Caco-2 (cell line): ENCODE measurements at regions of chr12 and their contacts with region 1.

Region 1: DNA sequence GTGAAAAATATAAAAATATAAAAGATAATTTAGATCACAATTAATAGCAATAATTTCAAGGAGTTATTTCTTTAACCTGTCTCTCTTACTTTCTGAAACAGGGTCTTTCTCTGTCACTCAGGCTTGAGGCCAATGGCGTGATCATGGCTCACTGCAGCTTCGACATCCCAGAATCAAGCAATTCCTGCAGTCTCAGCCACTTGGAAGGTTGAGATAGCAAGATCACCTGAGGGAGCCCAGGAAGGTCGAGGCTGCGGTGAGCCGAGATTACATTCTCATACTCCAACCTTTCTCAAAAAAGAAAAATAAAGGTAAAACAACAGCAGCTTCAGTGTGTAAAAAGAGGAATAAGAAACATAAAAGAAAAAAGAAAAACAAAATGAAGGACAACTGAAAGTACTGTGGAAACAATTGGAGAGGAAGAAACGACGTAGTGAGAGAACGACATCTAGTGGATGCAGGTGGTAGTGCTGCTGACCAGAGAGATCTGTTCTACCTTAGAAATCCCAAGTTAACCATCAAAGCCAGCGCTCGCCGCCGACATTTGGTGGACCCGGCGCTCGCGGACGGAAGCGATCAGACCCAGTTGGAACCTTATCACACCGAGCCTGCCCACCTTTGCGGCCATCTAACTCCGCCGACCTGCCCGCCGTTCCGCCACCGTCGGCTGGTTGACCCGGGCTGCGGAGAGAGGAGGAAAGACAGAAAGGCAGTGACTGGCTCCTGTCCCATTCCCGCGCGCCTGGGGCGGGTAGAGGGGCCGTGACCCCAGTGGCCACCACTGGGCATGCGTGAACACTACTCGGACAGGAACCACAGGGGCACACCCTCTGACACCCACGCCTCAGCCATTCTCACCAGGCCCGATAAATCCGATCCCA is 196.1 kb downstream of the ALG10 start:
- DNase-seq: peak; percentile 74 to 79
- H3K4me3 ChIP-seq: peak overlapping the region; percentile 12
- H3K4me3 Mint-ChIP-seq: peak overlapping the region; percentile 30
- H3K27ac Mint-ChIP-seq: no peak overlapping the region
- H3K4me1 ChIP-seq: no peaks in the 10 kb centered on the region
- H3K4me1 Mint-ChIP-seq: no peaks in the 10 kb centered on the region
- H3K27me3 ChIP-seq: no peaks in the 10 kb centered on the region; the same call in 1 of the 2 replicates
- H3K27me3 Mint-ChIP-seq: peaks cover 12% of the 10 kb centered on the region
- CTCF ChIP-seq: peak; percentile 93 to 94

Region 2: DNA sequence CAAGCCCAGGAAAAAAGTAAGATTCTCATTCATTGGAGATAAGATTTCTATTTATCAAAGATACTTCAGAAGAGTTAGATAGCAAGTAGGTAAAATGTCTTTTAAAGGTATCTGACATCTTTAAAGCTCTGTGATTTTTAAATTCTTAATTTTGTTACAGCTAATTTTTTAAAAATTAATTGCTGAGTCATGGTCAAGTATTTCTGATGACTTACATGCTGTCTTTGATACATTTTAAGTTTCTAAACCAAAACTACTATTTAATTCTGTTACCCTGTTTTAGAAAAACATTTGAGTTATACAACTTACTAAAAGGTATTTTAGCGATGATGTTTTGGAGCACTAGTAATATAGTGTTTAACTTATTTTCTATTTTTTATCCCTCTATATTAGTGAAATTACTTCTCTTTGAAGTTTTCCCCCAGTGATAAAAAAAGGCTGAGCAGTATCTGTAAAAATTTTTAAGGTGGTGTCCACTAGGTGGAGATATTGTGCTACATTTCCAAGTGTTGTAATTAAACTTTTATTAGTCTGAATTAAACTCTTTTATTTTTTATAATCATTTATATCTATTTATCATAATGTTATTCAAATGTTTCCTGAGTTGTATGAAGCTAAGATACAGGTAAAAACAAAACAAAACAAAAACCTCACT is 184.7 kb before region 1 on chr12:
- CTCF ChIA-PET with region 1: no interaction called
- POLR2A ChIA-PET with region 1: no interaction called
- intact Hi-C with region 1: loop called (anchors 1 kb)
- DNase-seq: peak in 1 of 2 experiments; percentile 29
- H3K4me3 ChIP-seq: no peak overlapping the region
- H3K4me3 Mint-ChIP-seq: no peak overlapping the region
- H3K27ac Mint-ChIP-seq: no peak overlapping the region
- H3K4me1 ChIP-seq: no peaks in the 10 kb centered on the region
- H3K4me1 Mint-ChIP-seq: no peaks in the 10 kb centered on the region
- H3K27me3 ChIP-seq: no peaks in the 10 kb centered on the region
- H3K27me3 Mint-ChIP-seq: no peaks in the 10 kb centered on the region
- CTCF ChIP-seq: peak; percentile 36 to 65

Region 3: DNA sequence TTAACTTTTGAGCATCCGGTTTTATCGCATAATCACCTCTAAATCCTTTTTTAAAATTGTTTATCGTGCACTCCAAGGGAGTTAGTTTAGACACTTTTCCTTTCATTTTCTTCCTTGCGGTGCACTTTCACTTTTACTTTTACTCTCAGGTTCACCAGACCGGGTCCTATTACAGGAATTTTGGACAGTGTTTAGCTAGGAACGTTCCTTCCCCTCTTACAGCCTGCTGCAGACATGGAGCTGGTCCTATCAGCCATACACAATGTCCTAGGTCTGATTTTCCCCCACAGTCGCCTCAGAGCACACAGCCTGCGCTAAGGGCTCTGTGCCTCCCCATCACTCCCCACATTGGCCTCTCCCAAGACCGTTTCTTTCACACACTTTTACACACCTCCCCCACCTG is 92.2 kb before region 1 on chr12:
- CTCF ChIA-PET with region 1: interaction called, 4 read pairs
- POLR2A ChIA-PET with region 1: no interaction called
- intact Hi-C with region 1: loop called (anchors 1 kb)
- DNase-seq: no peak
- H3K4me3 ChIP-seq: no peak overlapping the region
- H3K4me3 Mint-ChIP-seq: no peak overlapping the region
- H3K27ac Mint-ChIP-seq: no peak overlapping the region
- H3K4me1 ChIP-seq: no peaks in the 10 kb centered on the region
- H3K4me1 Mint-ChIP-seq: no peaks in the 10 kb centered on the region
- H3K27me3 ChIP-seq: no peaks in the 10 kb centered on the region
- H3K27me3 Mint-ChIP-seq: peaks cover 4% of the 10 kb centered on the region
- CTCF ChIP-seq: no peak

Region 4: DNA sequence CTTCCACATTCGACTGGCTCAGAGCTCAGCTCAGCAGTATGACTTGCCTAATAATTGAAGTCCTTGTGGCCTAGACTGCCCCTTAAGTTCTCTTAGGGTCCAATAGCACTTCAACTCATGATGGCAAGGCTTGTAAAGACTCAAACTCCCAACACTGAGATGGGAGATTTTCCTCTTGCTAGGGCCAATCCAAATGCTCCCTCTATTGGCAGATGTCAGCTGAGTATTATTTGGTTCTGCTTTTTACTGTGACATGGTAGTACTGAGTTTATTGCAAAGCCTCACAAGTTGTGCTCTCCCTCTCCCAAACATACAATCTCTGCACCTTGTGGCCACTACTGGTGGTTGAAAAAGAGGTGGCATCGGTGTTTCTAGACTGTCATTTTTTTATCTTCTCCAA is 31.9 kb before region 1 on chr12:
- CTCF ChIA-PET with region 1: no interaction called
- POLR2A ChIA-PET with region 1: no interaction called
- intact Hi-C with region 1: loop called (anchors 1 kb)
- DNase-seq: no peak
- H3K4me3 ChIP-seq: no peak overlapping the region
- H3K4me3 Mint-ChIP-seq: no peak overlapping the region
- H3K27ac Mint-ChIP-seq: no peak overlapping the region
- H3K4me1 ChIP-seq: no peaks in the 10 kb centered on the region
- H3K4me1 Mint-ChIP-seq: no peaks in the 10 kb centered on the region
- H3K27me3 ChIP-seq: no peaks in the 10 kb centered on the region
- H3K27me3 Mint-ChIP-seq: no peaks in the 10 kb centered on the region
- CTCF ChIP-seq: peak; percentile 19 to 24

Region 5: DNA sequence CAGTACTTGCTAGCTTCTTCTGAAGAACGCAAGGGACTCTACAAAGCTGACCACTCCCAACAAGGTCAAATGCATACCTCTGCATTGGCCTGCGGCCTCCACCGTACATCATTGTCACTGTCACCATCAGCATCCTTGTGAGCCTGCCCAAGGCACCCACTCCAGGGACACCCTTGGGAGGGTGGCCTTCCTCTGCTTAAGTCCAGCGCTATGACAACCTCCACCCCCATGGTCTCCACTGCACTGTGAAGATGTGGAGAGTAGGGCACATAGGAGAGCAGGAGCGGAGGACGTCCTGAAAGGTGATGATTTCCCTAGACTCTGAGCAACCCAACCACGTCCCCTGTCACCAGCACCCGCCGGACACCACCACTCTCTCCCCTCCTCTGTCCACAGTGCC is 56.7 kb after region 1 on chr12:
- CTCF ChIA-PET with region 1: no interaction called
- POLR2A ChIA-PET with region 1: no interaction called
- intact Hi-C with region 1: no loop called
- DNase-seq: no peak
- H3K4me3 ChIP-seq: no peak overlapping the region
- H3K4me3 Mint-ChIP-seq: no peak overlapping the region
- H3K27ac Mint-ChIP-seq: no peak overlapping the region
- H3K4me1 ChIP-seq: no peaks in the 10 kb centered on the region
- H3K4me1 Mint-ChIP-seq: no peaks in the 10 kb centered on the region
- H3K27me3 ChIP-seq: no peaks in the 10 kb centered on the region
- H3K27me3 Mint-ChIP-seq: peaks cover 5% of the 10 kb centered on the region
- CTCF ChIP-seq: no peak

Region 6: GRCh38 chr12:34625116-34625515 is 406.7 kb after region 1 on chr12:
- CTCF ChIA-PET with region 1: no interaction called
- POLR2A ChIA-PET with region 1: no interaction called
- intact Hi-C with region 1: loop called (anchors 1 kb)
- DNase-seq: peak in 1 of 2 experiments; percentile 40
- H3K4me3 ChIP-seq: no peak overlapping the region
- H3K4me3 Mint-ChIP-seq: no peak overlapping the region
- H3K27ac Mint-ChIP-seq: no peak overlapping the region
- H3K4me1 ChIP-seq: no peaks in the 10 kb centered on the region
- H3K4me1 Mint-ChIP-seq: no peaks in the 10 kb centered on the region
- H3K27me3 ChIP-seq: no peaks in the 10 kb centered on the region
- H3K27me3 Mint-ChIP-seq: no peaks in the 10 kb centered on the region
- CTCF ChIP-seq: peak; percentile 4 to 57